Right cardiac atrium (tissue), 5 donors: ENCODE measurements at regions of chr1 and their contacts with region 1.

Region 1: DNA sequence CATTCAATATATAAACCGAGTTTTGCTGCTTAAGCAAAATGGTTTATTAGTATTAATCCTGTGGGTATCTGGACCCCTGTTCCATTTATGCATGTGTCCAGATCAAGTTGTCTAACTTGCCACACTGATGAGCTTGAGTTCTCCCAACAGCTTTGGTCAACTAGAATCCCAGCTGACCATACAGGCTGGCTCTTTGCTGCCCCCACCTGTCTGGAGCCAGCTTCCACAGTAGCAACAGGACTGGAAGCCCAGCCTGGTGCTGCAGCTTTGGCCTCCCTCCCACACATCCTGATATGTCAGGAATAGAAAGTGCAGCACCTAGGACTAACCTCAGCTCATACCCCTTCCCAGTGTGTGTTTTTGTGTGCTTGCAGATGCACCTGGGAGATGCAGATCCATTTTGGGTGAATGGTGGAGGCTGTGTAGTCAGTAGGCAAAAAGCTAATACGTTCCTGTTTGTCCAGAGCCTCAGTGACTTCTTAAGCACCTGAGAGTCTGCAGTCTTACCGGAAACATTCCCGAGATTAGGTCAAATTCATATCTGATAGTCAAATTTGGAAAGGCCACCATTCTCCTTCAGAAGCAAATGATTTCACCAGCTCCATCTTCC is 40.9 kb upstream of the BEND5 start:
- DNase-seq: peak; percentile 61 to 83 (median 80)
- ATAC-seq: peak; percentile 71 to 82
- H3K4me3 ChIP-seq: no peak overlapping the region
- H3K27ac ChIP-seq: no peak overlapping the region
- H3K4me1 ChIP-seq: no peaks in the 10 kb centered on the region
- H3K27me3 ChIP-seq: no peaks in the 10 kb centered on the region

Region 2: DNA sequence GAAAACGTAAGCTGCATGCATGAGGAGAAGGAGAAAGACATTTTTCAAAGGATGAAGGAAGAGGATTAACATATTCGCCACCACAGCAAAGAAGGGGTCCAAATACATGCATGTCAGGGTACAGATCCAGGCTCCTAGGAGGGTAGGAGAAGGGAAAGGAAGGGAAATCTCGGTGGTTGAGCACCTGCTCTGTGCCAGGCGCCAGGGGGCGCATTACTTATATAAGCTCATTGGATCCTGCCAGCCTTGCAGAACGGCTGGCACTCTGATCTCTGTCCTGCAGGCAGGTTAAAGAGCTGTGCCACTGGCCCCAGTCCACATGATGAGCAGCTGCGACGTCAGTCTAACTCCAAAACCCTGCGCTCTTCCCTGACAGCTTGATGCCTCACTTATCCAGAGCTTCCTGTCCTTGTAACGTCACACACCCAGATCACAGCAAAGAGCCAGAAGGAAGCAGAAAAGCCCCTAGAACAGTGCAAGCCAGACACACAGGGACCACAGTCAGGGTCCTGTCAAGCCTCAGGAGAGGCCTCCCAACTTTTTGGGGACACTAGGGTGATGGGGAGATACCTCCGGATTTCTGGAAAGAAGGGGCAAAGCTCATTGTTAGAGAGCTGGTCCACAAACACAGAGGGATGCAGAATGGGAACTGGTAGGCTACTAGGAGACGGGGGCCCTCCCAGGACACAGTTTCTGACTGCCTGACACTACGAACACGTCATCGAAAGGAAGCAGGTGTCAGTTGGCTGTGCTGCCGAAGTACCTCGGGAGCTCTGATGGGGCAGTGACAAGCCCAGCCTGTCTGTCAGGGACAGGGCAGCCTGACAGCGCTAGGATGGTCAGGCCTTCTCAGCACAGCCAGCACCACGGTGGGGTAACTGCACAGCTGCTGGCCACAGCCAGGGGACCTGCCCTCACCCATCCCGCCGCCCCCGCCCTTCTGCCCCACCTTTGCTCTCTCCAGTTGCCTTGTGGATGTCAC is 140.0 kb before region 1 on chr1:
- intact Hi-C with region 1: loop called in 1 of 4 experiments (anchors 10 kb)
- DNase-seq: peak; percentile 59 to 88 (median 86)
- ATAC-seq: peak; percentile 40 to 63
- H3K4me3 ChIP-seq: no peak overlapping the region
- H3K27ac ChIP-seq: no peak overlapping the region
- H3K4me1 ChIP-seq: no peaks in the 10 kb centered on the region
- H3K27me3 ChIP-seq: no peaks in the 10 kb centered on the region